CD4-positive, alpha-beta T cell (primary cell): ENCODE measurements at regions of chr22 and their contacts with region 1.

Region 1: DNA sequence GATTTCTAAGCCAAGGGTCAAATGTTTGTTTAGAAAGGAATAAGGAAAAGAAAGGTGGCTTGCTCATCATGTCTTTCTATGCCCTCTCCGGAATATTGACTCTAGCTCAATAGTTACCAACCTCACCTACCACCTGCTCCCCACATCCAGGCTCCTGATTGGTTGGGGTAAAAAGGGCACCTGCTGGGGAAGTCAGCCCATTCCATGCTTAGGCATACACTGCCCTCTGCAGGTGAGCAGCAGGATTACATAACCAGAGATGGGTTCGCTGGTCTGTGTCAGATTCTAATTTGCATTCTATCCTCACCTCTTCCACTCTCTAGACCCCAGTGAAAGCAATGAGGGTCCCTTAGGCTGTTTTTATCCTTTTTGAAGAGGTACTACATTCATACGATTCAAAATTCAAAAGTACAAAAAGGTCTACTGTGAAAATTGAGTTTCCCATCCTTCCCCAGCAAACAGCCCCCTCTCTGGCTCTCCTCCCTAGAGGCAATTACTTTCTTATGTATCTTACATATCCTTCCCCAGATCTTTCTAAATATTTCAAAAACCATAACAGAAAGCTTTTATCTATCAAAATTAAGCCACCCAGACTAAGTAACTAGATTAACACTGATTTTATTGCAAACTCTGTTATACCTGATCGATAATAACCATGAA is 98.0 kb upstream of the ASPHD2 start:
- DNase-seq: peak; percentile 15 to 74 (median 40)
- ATAC-seq: peak; percentile 78
- H3K4me3 ChIP-seq: no peak overlapping the region
- H3K4me3 Mint-ChIP-seq: no peak overlapping the region
- H3K27ac ChIP-seq: no peak overlapping the region
- H3K27ac Mint-ChIP-seq: no peak overlapping the region
- H3K4me1 ChIP-seq: no peaks in the 10 kb centered on the region
- H3K4me1 Mint-ChIP-seq: no peaks in the 10 kb centered on the region
- H3K27me3 ChIP-seq: peaks cover 8 to 12% of the 10 kb centered on the region in 2 experiments
- H3K27me3 Mint-ChIP-seq: peaks cover 45% of the 10 kb centered on the region
- CTCF ChIP-seq: peak; percentile 89

Region 2: GRCh38 chr22:25235547-25236290 is 1095.4 kb before region 1 on chr22:
- CTCF ChIA-PET with region 1: no interaction called
- POLR2A ChIA-PET with region 1: no interaction called
- intact Hi-C with region 1: loop called in 1 of 2 experiments (anchors 5 kb)
- DNase-seq: peak; percentile 25 to 71 (median 44)
- ATAC-seq: peak; percentile 58
- H3K4me3 ChIP-seq: no peak overlapping the region
- H3K4me3 Mint-ChIP-seq: no peak overlapping the region
- H3K27ac ChIP-seq: no peak overlapping the region
- H3K27ac Mint-ChIP-seq: no peak overlapping the region
- H3K4me1 ChIP-seq: peaks cover 6% of the 10 kb centered on the region
- H3K4me1 Mint-ChIP-seq: peaks cover 6% of the 10 kb centered on the region
- H3K27me3 ChIP-seq: peaks cover 7 to 15% of the 10 kb centered on the region in 2 experiments
- H3K27me3 Mint-ChIP-seq: peaks cover 61% of the 10 kb centered on the region
- CTCF ChIP-seq: peak; percentile 37

Region 3: DNA sequence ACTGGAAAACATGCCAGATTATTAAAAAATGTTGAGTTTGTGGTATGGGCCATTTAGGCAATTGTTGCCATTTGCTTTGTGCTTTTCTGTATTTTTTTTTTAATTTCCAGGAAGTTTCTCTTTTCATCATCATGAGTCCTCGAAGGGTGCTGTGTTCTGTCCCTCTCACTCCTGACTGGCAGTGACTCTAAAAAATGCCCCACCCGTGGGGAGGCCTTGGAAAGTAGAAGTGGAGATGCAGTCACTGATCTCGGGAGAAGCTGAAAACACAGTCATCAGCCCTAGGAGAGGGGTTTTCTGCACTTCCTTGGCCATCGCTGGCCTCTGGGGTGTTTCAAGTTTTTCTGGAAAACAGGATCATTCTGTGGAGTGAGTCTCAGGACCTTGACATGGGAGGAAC is 865.1 kb before region 1 on chr22:
- CTCF ChIA-PET with region 1: no interaction called
- POLR2A ChIA-PET with region 1: no interaction called
- intact Hi-C with region 1: loop called (anchors 1 kb)
- DNase-seq: no peak
- ATAC-seq: no peak
- H3K4me3 ChIP-seq: no peak overlapping the region
- H3K4me3 Mint-ChIP-seq: no peak overlapping the region
- H3K27ac ChIP-seq: no peak overlapping the region
- H3K27ac Mint-ChIP-seq: no peak overlapping the region
- H3K4me1 ChIP-seq: peaks cover 5% of the 10 kb centered on the region
- H3K4me1 Mint-ChIP-seq: peaks cover 5% of the 10 kb centered on the region
- H3K27me3 ChIP-seq: no peaks in the 10 kb centered on the region
- H3K27me3 Mint-ChIP-seq: no peaks in the 10 kb centered on the region
- CTCF ChIP-seq: no peak

Region 4: GRCh38 chr22:25777870-25778269 is 553.2 kb before region 1 on chr22:
- CTCF ChIA-PET with region 1: no interaction called
- POLR2A ChIA-PET with region 1: no interaction called
- intact Hi-C with region 1: loop called in 1 of 2 experiments (anchors 5 kb)
- DNase-seq: no peak
- ATAC-seq: no peak
- H3K4me3 ChIP-seq: no peak overlapping the region
- H3K4me3 Mint-ChIP-seq: no peak overlapping the region
- H3K27ac ChIP-seq: no peak overlapping the region
- H3K27ac Mint-ChIP-seq: no peak overlapping the region
- H3K4me1 ChIP-seq: peaks cover 3% of the 10 kb centered on the region
- H3K4me1 Mint-ChIP-seq: peaks cover 1% of the 10 kb centered on the region
- H3K27me3 ChIP-seq: no peaks in the 10 kb centered on the region
- H3K27me3 Mint-ChIP-seq: peaks cover 4% of the 10 kb centered on the region
- CTCF ChIP-seq: no peak

Region 5: GRCh38 chr22:25898689-25899365 is 432.3 kb before region 1 on chr22:
- CTCF ChIA-PET with region 1: no interaction called
- POLR2A ChIA-PET with region 1: no interaction called
- intact Hi-C with region 1: loop called in 1 of 2 experiments (anchors 10 kb)
- DNase-seq: no peak
- ATAC-seq: no peak
- H3K4me3 ChIP-seq: no peak overlapping the region
- H3K4me3 Mint-ChIP-seq: no peak overlapping the region
- H3K27ac ChIP-seq: no peak overlapping the region
- H3K27ac Mint-ChIP-seq: no peak overlapping the region
- H3K4me1 ChIP-seq: no peaks in the 10 kb centered on the region
- H3K4me1 Mint-ChIP-seq: no peaks in the 10 kb centered on the region
- H3K27me3 ChIP-seq: peaks cover 0 to 6% of the 10 kb centered on the region in 2 experiments
- H3K27me3 Mint-ChIP-seq: peaks cover 38% of the 10 kb centered on the region
- CTCF ChIP-seq: no peak